ENCODE measurements at regions of chr2 and their contacts with region 1.

Region 1: GRCh38 chr2:70565039-70565731 is 11.6 kb upstream of the TGFA start:
- DNase-seq: peak; percentile 8 to 90 (median 81)
- H3K4me3 ChIP-seq: peak overlapping the region in 1 of 59 donors; percentile 18
- H3K27ac ChIP-seq: peak overlapping the region; percentile 82 to 100 (median 97)
- H3K27me3 ChIP-seq: peaks cover 0 to 4% (median 0%) of the 10 kb centered on the region in 45 donors
- CTCF ChIP-seq: peak in 18 of 56 donors; percentile 7 to 36 (median 18)

Region 2: GRCh38 chr2:70583091-70583490 is 17.9 kb after region 1 on chr2:
- intact Hi-C with region 1: no loop called
- DNase-seq: no peak
- H3K4me3 ChIP-seq: no peak overlapping the region
- H3K27ac ChIP-seq: no peak overlapping the region
- H3K27me3 ChIP-seq: no peaks in the 10 kb centered on the region
- CTCF ChIP-seq: no peak

Region 3: GRCh38 chr2:70607121-70607561 is 42.0 kb after region 1 on chr2:
- intact Hi-C with region 1: loop called in 1 of 2 experiments (anchors 5 kb)
- DNase-seq: peak in 3 of 10 donors; percentile 23 to 55 (median 43)
- H3K4me3 ChIP-seq: peak overlapping the region in 1 of 59 donors; percentile 2
- H3K27ac ChIP-seq: peak overlapping the region in 26 of 59 donors; percentile 3 to 82 (median 54)
- H3K27me3 ChIP-seq: peaks cover 0 to 9% (median 0%) of the 10 kb centered on the region in 45 donors
- CTCF ChIP-seq: no peak

Region 4: GRCh38 chr2:71018625-71019024 is 453.4 kb after region 1 on chr2:
- intact Hi-C with region 1: no loop called
- DNase-seq: no peak
- H3K4me3 ChIP-seq: no peak overlapping the region
- H3K27ac ChIP-seq: no peak overlapping the region
- H3K27me3 ChIP-seq: no peaks in the 10 kb centered on the region
- CTCF ChIP-seq: no peak

Measured in dorsolateral prefrontal cortex (tissue), 120 donors.